SK-N-SH (cell line): ENCODE measurements at regions of chr6 and their contacts with region 1.

Region 1: DNA sequence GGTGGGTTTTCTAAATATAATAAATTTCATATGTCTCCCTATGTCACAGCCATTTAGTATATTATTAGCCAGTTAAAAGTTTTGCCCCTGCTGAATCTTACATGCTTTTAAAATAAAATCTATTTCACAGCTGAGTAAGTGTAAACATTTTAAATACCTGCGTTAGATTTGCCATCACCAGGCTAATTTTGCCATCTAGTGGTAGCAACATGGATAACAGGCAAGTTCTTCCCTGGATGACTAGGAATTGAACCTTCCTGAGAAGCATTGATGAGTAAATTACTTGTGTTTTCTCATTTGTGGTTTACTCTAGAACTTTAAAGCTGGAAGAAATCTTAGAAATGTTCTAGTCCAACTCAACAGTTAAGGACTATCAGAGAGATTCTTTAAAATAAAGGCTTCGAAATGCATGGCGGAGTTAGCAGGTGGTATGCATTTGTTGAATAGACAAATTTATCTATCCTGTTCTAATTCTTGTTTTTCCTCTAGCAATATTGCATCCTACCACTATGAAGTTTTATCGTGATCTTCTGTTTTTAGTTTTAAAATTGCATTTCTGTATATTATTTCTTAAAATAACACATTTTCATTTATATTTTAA is 2.6 kb downstream of the PRSS35 start:
- DNase-seq: peak; percentile 50
- H3K4me3 ChIP-seq: no peak overlapping the region; a peak in 1 of 4 replicates
- H3K27ac ChIP-seq: no peak overlapping the region
- H3K4me1 ChIP-seq: peaks cover 4 to 11% of the 10 kb centered on the region in 2 experiments; a peak in 2 of 4 replicates
- H3K27me3 ChIP-seq: no peaks in the 10 kb centered on the region
- CTCF ChIP-seq: peak; percentile 93
- EP300 ChIP-seq: no peak
- RAD21 ChIP-seq: peak; percentile 96

Region 2: GRCh38 chr6:83199863-83200225 is 315.1 kb before region 1 on chr6:
- CTCF ChIA-PET with region 1: interaction called, 17 read pairs
- POLR2A ChIA-PET with region 1: no interaction called
- DNase-seq: no peak
- H3K4me3 ChIP-seq: no peak overlapping the region
- H3K27ac ChIP-seq: peak overlapping the region in 1 of 2 experiments; percentile 57; a peak in 2 of 4 replicates
- H3K4me1 ChIP-seq: peaks cover 3 to 20% of the 10 kb centered on the region in 2 experiments; a peak in 2 of 4 replicates
- H3K27me3 ChIP-seq: no peaks in the 10 kb centered on the region
- CTCF ChIP-seq: no peak
- EP300 ChIP-seq: no peak
- RAD21 ChIP-seq: no peak

Region 3: DNA sequence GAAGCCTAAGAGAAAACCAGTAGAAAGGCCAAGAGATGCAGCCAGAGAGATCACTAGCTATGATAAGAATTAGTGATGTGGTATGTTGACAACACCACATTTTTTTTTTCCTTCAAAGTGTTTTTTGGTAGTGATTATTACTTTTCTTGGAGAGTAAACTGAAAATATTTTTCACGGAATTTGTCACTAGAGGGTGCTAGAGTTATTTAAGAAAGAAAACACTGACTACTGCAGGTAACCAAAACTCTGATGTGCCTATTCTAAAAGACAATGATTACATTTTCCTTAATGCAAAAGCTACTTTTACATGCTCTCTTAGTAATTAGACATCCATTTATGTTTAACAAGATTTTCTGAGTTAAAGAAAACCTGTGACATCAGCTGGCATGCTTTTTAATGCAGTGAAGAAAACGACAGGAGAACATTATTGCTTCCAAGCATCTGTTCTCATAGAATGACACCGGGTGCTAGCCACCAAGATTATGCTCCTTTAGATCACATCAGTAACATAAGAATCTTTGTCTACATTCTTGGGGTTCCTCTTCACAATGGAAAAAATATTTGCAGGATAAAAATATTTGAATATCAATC is 293.0 kb before region 1 on chr6:
- CTCF ChIA-PET with region 1: interaction called, 293 read pairs
- POLR2A ChIA-PET with region 1: no interaction called
- DNase-seq: peak; percentile 28
- H3K4me3 ChIP-seq: no peak overlapping the region; a peak in 1 of 4 replicates
- H3K27ac ChIP-seq: no peak overlapping the region
- H3K4me1 ChIP-seq: peaks cover 0 to 1% of the 10 kb centered on the region in 2 experiments; a peak in 1 of 4 replicates
- H3K27me3 ChIP-seq: no peaks in the 10 kb centered on the region
- CTCF ChIP-seq: peak; percentile 77
- EP300 ChIP-seq: no peak
- RAD21 ChIP-seq: peak; percentile 80

Region 4: GRCh38 chr6:83352424-83353061 is 162.4 kb before region 1 on chr6:
- CTCF ChIA-PET with region 1: no interaction called
- POLR2A ChIA-PET with region 1: no interaction called
- DNase-seq: no peak
- H3K4me3 ChIP-seq: no peak overlapping the region
- H3K27ac ChIP-seq: no peak overlapping the region
- H3K4me1 ChIP-seq: no peaks in the 10 kb centered on the region; a peak in 1 of 4 replicates
- H3K27me3 ChIP-seq: no peaks in the 10 kb centered on the region
- CTCF ChIP-seq: no peak
- EP300 ChIP-seq: no peak
- RAD21 ChIP-seq: no peak

Region 5: DNA sequence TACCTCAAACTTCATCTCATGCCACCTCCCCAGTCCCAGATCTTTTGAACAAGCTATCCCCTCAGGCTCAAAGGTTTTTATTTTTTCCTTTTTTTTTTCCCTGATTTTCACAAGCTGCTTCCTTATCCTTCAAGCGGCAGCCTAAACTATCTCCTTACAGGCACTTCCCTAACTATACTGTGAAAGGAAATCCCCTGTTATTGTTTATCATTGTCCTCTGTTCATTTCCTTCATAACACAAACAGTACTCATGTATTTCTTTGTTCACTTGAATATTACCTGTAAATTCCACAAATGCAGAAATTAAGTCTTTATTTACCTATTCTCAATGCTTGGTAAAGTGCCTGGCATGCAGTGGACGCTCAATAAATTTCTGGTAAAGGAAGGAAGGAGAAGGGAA is 133.0 kb before region 1 on chr6:
- CTCF ChIA-PET with region 1: interaction called, 15 read pairs
- POLR2A ChIA-PET with region 1: no interaction called
- DNase-seq: no peak
- H3K4me3 ChIP-seq: no peak overlapping the region
- H3K27ac ChIP-seq: no peak overlapping the region
- H3K4me1 ChIP-seq: peaks cover 0 to 50% of the 10 kb centered on the region in 2 experiments; a peak in 3 of 4 replicates
- H3K27me3 ChIP-seq: no peaks in the 10 kb centered on the region
- CTCF ChIP-seq: no peak
- EP300 ChIP-seq: no peak
- RAD21 ChIP-seq: no peak

Region 6: GRCh38 chr6:83417880-83418663 is 96.9 kb before region 1 on chr6:
- CTCF ChIA-PET with region 1: interaction called, 73 read pairs
- POLR2A ChIA-PET with region 1: no interaction called
- DNase-seq: peak; percentile 36
- H3K4me3 ChIP-seq: no peak overlapping the region
- H3K27ac ChIP-seq: no peak overlapping the region
- H3K4me1 ChIP-seq: no peaks in the 10 kb centered on the region
- H3K27me3 ChIP-seq: no peaks in the 10 kb centered on the region
- CTCF ChIP-seq: peak; percentile 63
- EP300 ChIP-seq: no peak
- RAD21 ChIP-seq: peak; percentile 79